Dorsolateral prefrontal cortex (tissue), 120 donors: ENCODE measurements at regions of chr15 and their contacts with region 1.

Region 1: DNA sequence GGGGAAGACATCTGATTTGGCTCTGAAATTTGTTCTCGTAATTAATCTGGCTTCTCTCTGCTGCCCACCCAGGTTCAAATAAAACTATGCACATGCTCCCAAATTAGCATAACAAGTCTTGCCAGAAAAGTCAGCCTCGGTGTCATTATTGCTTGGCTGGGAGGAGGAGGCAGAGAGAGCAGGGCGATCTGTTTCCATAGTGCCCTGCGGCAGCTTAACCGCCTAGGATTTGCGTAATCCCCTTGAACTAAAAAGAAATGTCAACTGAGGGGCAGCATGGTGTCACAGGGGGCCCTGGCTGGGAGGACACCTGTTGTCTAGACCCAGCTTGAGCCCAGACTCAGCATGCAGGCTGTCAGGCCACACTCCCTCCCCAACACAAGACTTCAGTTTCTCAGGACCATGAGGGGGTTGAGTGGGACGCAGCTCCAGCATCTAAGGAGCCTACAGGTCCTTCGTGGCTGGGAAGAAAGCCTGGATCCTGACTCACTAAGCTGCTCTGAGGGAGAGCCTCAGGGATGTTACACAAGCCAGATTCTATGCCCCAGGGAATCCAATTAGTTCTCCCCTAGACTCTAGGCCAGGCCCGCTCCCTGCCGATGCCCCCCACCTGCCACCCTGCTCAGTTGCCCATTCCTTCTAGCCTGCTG is 17.3 kb downstream of the MRPS11 start:
- DNase-seq: peak in 3 of 10 donors; percentile 17 to 49 (median 36)
- H3K4me3 ChIP-seq: no peak overlapping the region
- H3K27ac ChIP-seq: peak overlapping the region in 31 of 59 donors; percentile 3 to 83 (median 36)
- H3K27me3 ChIP-seq: no peaks in the 10 kb centered on the region
- CTCF ChIP-seq: no peak

Region 2: GRCh38 chr15:88419830-88420229 is 65.0 kb before region 1 on chr15:
- intact Hi-C with region 1: no loop called
- DNase-seq: no peak
- H3K4me3 ChIP-seq: no peak overlapping the region
- H3K27ac ChIP-seq: no peak overlapping the region
- H3K27me3 ChIP-seq: peaks cover 0 to 5% (median 0%) of the 10 kb centered on the region in 45 donors
- CTCF ChIP-seq: no peak

Region 3: GRCh38 chr15:88533376-88533775 is 48.6 kb after region 1 on chr15:
- intact Hi-C with region 1: loop called in 1 of 2 experiments (anchors 5 kb)
- DNase-seq: no peak
- H3K4me3 ChIP-seq: no peak overlapping the region
- H3K27ac ChIP-seq: no peak overlapping the region
- H3K27me3 ChIP-seq: no peaks in the 10 kb centered on the region
- CTCF ChIP-seq: no peak

Region 4: GRCh38 chr15:88610701-88611231 is 126.0 kb after region 1 on chr15:
- intact Hi-C with region 1: no loop called
- DNase-seq: no peak
- H3K4me3 ChIP-seq: no peak overlapping the region
- H3K27ac ChIP-seq: no peak overlapping the region
- H3K27me3 ChIP-seq: peaks cover 0 to 17% (median 4%) of the 10 kb centered on the region in 45 donors
- CTCF ChIP-seq: no peak

Region 5: DNA sequence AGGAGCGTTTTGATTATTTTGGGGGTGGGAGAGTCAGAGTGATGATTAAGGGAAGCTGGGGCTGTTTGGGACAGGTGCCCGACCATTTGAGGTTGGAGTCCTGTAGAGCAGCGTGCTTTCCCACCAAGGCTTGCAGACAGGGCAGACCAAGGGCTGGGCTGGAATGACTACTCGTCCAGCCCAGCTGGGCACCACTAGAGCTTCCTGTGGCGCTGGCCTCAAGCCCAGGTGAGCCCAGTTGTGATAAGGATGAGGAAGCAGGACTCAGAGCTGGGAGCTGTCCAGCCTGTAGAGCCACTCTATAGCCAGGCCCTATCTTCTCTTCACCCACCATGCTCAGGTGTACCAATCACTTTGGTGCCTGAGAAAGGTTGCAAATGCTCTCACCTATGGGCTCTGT is 242.6 kb after region 1 on chr15:
- intact Hi-C with region 1: no loop called
- DNase-seq: no peak
- H3K4me3 ChIP-seq: no peak overlapping the region
- H3K27ac ChIP-seq: no peak overlapping the region
- H3K27me3 ChIP-seq: peaks cover 0 to 5% (median 0%) of the 10 kb centered on the region in 45 donors
- CTCF ChIP-seq: no peak